ENCODE measurements at regions of chr7 and their contacts with region 1.

Region 1: GRCh38 chr7:26864309-26865093 is at the start of gene SKAP2:
- DNase-seq: peak; percentile 52 to 94 (median 70)
- ATAC-seq: peak; percentile 86
- H3K4me3 ChIP-seq: peak within 1 kb of the TSS; percentile 89
- H3K4me3 Mint-ChIP-seq: peak within 1 kb of the TSS; percentile 91
- H3K27ac ChIP-seq: peak within 1 kb of the TSS; percentile 43 to 56
- H3K27ac Mint-ChIP-seq: peak within 1 kb of the TSS; percentile 57
- H3K4me1 ChIP-seq: peaks cover 17% of the 10 kb centered on the region
- H3K4me1 Mint-ChIP-seq: peaks cover 23% of the 10 kb centered on the region
- H3K27me3 ChIP-seq: peaks cover 0 to 3% of the 10 kb centered on the region in 2 experiments
- H3K27me3 Mint-ChIP-seq: peaks cover 75% of the 10 kb centered on the region
- CTCF ChIP-seq: no peak
- total RNA-seq, gene SKAP2: 0.91 to 1.2 TPM

Region 2: GRCh38 chr7:25862260-25863037 is 1002.1 kb before region 1 on chr7:
- CTCF ChIA-PET with region 1: no interaction called
- POLR2A ChIA-PET with region 1: no interaction called
- intact Hi-C with region 1: loop called in 1 of 2 experiments (anchors 10 kb)
- DNase-seq: peak; percentile 26 to 87 (median 51)
- ATAC-seq: peak; percentile 86
- H3K4me3 ChIP-seq: peak overlapping the region; percentile 13
- H3K4me3 Mint-ChIP-seq: peak overlapping the region; percentile 55
- H3K27ac ChIP-seq: no peak overlapping the region
- H3K27ac Mint-ChIP-seq: peak overlapping the region; percentile 78
- H3K4me1 ChIP-seq: peaks cover 20% of the 10 kb centered on the region
- H3K4me1 Mint-ChIP-seq: peaks cover 24% of the 10 kb centered on the region
- H3K27me3 ChIP-seq: peaks cover 66 to 98% of the 10 kb centered on the region in 2 experiments
- H3K27me3 Mint-ChIP-seq: peaks cover 30% of the 10 kb centered on the region
- CTCF ChIP-seq: no peak

Region 3: DNA sequence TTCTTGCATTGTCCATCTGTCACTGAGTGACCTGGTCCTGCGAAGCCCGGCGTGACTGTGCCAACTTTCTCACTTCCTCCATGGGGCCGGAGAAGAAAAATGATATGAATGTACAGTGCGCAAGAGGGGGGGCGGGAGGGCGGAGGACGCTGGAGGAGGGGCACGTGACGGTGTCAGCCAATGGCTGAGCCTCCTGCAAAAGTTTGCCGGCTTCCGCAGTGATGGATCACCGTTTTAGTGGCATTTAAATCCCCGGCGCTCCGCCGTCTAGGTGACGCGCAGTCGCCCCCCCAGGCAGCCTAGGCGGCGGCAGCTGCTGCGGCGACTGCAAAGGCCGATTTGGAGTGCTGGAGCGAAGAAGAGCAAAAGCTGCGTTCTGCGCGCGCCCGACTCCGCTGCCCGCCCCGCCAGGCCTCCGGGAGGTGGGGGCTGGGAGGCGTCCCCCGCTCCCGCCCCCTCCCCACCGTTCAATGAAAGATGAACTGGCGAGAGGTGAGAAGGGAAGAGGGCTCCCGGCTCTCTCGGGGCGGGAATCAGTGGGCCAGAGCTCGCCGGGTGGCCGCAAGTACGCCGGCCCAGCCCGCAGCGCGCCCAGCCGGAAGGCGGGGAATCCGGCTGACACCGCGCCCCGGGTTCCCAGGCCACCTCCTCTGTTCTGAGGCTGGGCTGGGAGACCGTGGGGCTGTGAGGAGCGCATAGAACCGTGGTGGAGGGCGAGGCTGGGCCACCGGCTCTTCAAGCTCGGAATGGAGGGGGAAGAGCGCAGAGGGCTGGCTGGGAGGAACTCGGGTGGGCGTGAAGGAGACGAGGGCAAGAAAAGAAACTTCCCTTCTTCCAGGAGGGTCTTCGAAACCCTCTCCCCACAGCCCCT is 231.6 kb after region 1 on chr7 and contains the start of gene HOXA1:
- CTCF ChIA-PET with region 1: no interaction called
- POLR2A ChIA-PET with region 1: interaction called, 3 read pairs
- intact Hi-C with region 1: loop called in 1 of 2 experiments (anchors 10 kb)
- DNase-seq: peak; percentile 24 to 92 (median 60)
- ATAC-seq: peak; percentile 85
- H3K4me3 ChIP-seq: peak within 1 kb of the TSS; percentile 77
- H3K4me3 Mint-ChIP-seq: peak within 1 kb of the TSS; percentile 90
- H3K27ac ChIP-seq: peak within 1 kb of the TSS in 1 of 2 donors; percentile 17
- H3K27ac Mint-ChIP-seq: no peak within 1 kb of the TSS
- H3K4me1 ChIP-seq: peaks cover 43% of the 10 kb centered on the region
- H3K4me1 Mint-ChIP-seq: peaks cover 22% of the 10 kb centered on the region
- H3K27me3 ChIP-seq: peaks cover 63 to 79% of the 10 kb centered on the region in 2 experiments
- H3K27me3 Mint-ChIP-seq: peaks cover 91% of the 10 kb centered on the region
- CTCF ChIP-seq: no peak
- total RNA-seq, gene HOXA1: 0.14 to 0.22 TPM

Region 4: GRCh38 chr7:27520815-27521790 is 656.6 kb after region 1 on chr7:
- CTCF ChIA-PET with region 1: no interaction called
- POLR2A ChIA-PET with region 1: no interaction called
- intact Hi-C with region 1: no loop called
- DNase-seq: no peak
- ATAC-seq: no peak
- H3K4me3 ChIP-seq: no peak overlapping the region
- H3K4me3 Mint-ChIP-seq: no peak overlapping the region
- H3K27ac ChIP-seq: no peak overlapping the region
- H3K27ac Mint-ChIP-seq: no peak overlapping the region
- H3K4me1 ChIP-seq: no peaks in the 10 kb centered on the region
- H3K4me1 Mint-ChIP-seq: peaks cover 11% of the 10 kb centered on the region
- H3K27me3 ChIP-seq: no peaks in the 10 kb centered on the region
- H3K27me3 Mint-ChIP-seq: no peaks in the 10 kb centered on the region
- CTCF ChIP-seq: no peak

Measured in CD4-positive, alpha-beta T cell (primary cell).